Calu3 (cell line): ENCODE measurements at regions of chr7 and their contacts with region 1.

Region 1: DNA sequence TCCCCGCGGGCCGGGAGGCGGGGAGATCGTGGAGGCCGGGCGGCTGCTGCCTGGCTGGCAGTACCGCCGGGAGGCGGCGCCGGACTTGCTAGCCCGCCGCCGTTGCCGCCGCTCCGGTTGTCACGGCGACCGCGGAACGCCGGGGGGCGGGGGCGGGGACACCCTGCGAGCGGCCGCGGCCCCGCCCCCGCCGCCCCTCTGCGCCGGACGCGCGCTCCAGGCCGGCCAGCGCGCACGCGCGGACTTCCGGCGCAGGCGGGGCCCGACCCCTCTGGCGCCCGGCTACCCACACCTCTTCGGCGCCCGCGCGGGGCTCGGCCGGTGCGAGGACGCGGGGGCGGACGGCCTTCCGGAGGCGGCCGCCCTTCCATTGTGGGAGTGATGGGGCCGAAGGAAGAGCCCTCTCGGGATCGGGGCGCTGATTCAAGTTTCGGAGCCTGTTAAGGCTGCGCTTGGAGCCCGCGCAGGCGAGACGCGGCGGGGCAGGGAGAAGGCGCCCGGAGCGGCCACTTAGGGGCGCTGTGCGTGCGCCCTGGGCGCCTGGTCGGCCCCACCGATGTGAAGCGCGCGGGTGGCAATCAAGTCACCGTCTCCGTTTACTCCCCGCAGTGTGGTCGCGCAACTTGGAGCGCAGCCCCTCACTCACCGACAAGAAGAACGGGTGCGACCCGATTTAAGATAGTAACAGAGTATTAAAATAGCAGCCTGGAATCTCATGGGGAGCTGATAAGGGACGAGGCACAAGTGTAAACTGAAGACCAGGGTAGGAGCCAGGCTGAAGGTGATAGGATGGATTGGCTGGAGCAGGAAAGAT is 448 bp upstream of the DPY19L1 start:
- DNase-seq: peak; percentile 99
- H3K4me3 Mint-ChIP-seq: peak overlapping the region; percentile 73
- H3K27ac Mint-ChIP-seq: peak overlapping the region; percentile 77
- H3K4me1 Mint-ChIP-seq: peaks cover 38% of the 10 kb centered on the region
- H3K27me3 Mint-ChIP-seq: peaks cover 4% of the 10 kb centered on the region
- CTCF ChIP-seq: peak; percentile 90

Region 2: GRCh38 chr7:34277016-34277802 is 760.5 kb before region 1 on chr7:
- CTCF ChIA-PET with region 1: no interaction called
- intact Hi-C with region 1: no loop called
- DNase-seq: no peak
- H3K4me3 Mint-ChIP-seq: no peak overlapping the region
- H3K27ac Mint-ChIP-seq: no peak overlapping the region
- H3K4me1 Mint-ChIP-seq: no peaks in the 10 kb centered on the region
- H3K27me3 Mint-ChIP-seq: no peaks in the 10 kb centered on the region
- CTCF ChIP-seq: no peak

Region 3: DNA sequence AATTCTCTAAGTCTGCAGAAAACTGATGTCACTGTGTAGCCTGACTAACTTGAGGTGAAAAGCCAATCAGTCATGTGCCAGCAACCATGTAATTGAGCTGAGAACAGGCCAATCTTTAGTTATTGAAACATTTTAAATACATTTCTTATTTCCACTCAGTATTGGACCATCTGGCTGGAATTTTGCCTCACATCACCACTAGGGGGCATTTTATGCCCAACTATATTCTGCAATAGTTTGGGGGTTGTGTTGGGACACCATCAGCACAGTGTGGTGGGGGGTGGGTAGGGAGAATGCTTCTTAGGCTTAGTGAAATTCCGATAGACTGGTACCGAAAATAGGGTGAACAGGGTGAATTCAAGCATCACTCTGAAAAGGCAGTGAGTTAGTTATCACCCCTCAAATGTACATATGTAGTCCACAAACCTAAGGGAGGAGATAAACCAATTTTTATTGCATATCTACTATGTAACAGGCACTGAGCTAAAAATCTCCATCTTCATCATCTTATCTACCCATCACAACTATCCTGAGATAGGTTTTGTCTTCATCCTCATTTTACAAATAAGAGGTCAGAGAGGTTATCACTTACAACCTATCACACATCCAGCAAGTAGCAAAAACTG is 361.9 kb before region 1 on chr7:
- CTCF ChIA-PET with region 1: interaction called, 4 read pairs
- intact Hi-C with region 1: loop called (anchors 5 kb)
- DNase-seq: peak; percentile 66
- H3K4me3 Mint-ChIP-seq: no peak overlapping the region
- H3K27ac Mint-ChIP-seq: no peak overlapping the region
- H3K4me1 Mint-ChIP-seq: peaks cover 24% of the 10 kb centered on the region
- H3K27me3 Mint-ChIP-seq: no peaks in the 10 kb centered on the region
- CTCF ChIP-seq: peak; percentile 85

Region 4: DNA sequence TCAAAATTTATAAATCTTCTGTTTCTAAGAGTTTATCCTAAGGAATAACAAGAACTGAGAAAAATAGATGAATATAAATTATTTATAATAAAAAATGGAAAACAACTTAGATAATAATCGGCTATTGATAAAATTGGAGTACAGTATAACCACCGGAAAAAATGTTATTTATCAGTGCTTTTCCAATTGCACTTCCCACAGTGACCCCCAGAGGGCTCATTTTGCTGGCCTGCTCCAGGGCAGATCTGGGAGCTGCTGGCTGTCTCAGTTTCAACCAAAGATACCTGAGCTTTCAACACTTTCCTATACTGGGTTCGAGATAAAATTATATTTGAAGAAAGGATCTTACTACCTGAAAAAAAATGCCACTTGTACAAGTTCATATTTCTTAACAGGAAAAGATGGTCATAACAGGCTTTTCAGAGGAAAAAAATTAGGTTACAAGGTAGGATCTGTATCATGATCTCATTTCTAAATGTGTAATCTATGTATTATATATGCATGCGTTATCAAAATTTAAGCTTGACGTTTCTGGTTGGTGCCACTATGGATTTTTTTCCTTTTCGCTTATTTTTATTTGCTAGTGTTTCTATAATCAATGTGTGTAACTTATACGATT is 214.0 kb before region 1 on chr7:
- CTCF ChIA-PET with region 1: interaction called, 21 read pairs
- intact Hi-C with region 1: loop called (anchors 1 kb)
- DNase-seq: peak; percentile 88
- H3K4me3 Mint-ChIP-seq: no peak overlapping the region
- H3K27ac Mint-ChIP-seq: no peak overlapping the region
- H3K4me1 Mint-ChIP-seq: no peaks in the 10 kb centered on the region
- H3K27me3 Mint-ChIP-seq: no peaks in the 10 kb centered on the region
- CTCF ChIP-seq: peak; percentile 97

Region 5: DNA sequence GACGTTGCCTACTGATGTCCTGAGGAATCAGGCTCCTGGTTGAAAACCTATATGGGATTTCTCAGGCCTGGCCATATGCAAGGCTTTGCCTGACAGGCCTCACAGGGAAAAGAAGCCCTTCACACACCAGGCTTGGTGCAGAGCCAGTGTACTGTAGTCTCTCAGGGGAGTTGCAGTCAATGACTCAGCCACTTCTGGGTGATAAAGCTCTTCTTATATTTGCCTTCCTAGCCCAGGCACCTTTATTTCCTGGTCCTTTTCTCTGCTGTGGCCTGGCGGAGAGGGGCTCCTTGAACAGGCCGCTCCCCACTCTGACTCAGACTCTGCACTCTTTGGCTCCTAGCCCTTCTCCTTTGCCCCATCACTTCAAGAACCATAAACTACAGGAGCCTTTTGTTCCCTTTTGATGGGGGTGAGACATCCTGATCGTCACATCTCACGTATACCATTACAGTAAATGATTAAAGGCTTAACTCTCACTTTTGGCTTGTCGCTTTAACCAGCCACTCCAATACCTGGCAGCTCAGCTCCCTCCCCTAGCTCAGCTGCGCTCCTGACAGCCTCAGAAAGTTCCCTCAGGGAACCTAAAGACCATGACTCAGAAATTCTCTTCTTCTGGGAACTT is 33.9 kb before region 1 on chr7:
- CTCF ChIA-PET with region 1: interaction called, 14 read pairs
- intact Hi-C with region 1: loop called (anchors 1 kb)
- DNase-seq: peak; percentile 96
- H3K4me3 Mint-ChIP-seq: peak overlapping the region; percentile 43
- H3K27ac Mint-ChIP-seq: peak overlapping the region; percentile 93
- H3K4me1 Mint-ChIP-seq: peaks cover 93% of the 10 kb centered on the region
- H3K27me3 Mint-ChIP-seq: no peaks in the 10 kb centered on the region
- CTCF ChIP-seq: no peak

Region 6: GRCh38 chr7:35286422-35286821 is 248.7 kb after region 1 on chr7:
- CTCF ChIA-PET with region 1: no interaction called
- intact Hi-C with region 1: no loop called
- DNase-seq: no peak
- H3K4me3 Mint-ChIP-seq: no peak overlapping the region
- H3K27ac Mint-ChIP-seq: no peak overlapping the region
- H3K4me1 Mint-ChIP-seq: no peaks in the 10 kb centered on the region
- H3K27me3 Mint-ChIP-seq: peaks cover 57% of the 10 kb centered on the region
- CTCF ChIP-seq: no peak